PC-9 (cell line): ENCODE measurements at regions of chr19 and their contacts with region 1.

Region 1: GRCh38 chr19:12847159-12848139 is 9.1 kb downstream of the MAST1 start:
- DNase-seq: peak; percentile 76 to 92
- H3K4me3 ChIP-seq: peak overlapping the region; percentile 49; the same call in 1 of the 2 replicates
- H3K27ac ChIP-seq: no peak overlapping the region
- H3K4me1 ChIP-seq: 0 out of 2 replicates have a peak, but pooled peaks cover 3% of the 10 kb centered on the region
- H3K27me3 ChIP-seq: no peaks in the 10 kb centered on the region
- CTCF ChIP-seq: peak; percentile 99

Region 2: DNA sequence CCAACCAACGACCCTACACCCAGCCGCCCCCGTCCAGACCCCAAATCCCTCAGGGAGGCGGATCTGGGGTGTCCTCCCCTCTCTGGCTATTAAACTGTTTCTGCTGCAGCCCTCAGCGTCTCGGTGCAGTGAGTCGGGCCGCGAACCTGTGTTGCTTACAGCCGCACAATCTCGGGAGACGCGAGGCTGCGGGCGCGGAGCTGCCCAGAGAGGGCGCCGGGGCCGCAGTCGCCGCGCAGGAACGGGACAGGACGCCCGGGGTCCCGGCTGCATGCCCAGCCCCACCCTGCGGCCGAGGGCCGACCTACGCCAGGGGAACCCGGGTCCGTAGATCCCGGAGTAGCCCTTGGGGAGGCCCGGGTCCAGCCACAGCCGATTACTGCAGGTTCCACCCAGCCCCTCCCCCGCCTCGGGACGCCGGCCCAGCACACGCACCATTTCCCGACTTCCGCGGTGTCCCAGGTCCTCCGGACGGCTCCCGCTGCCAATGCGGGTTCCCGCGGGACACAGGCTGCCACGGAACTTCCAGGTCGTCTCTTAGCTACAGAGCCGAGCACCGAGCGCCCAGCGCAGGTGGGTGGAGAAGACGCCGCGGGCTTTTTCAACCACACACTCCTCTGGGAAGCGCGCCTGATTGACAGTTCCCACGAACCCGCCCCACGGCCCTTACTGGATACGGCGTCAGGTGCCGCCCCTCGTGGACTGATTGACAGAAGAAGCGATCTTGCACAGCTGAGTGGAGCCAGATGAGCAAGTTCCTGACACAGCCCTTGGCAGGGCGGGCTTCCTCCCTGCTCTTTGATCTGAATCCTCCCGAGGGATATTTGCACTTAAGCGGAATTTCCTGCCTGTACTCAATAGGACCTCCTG is 446.6 kb before region 1 on chr19 and contains the start of gene ZNF799:
- CTCF ChIA-PET with region 1: no interaction called
- POLR2A ChIA-PET with region 1: interaction called, 10 read pairs
- intact Hi-C with region 1: no loop called
- DNase-seq: peak; percentile 96 to 97
- H3K4me3 ChIP-seq: peak within 1 kb of the TSS; percentile 93
- H3K27ac ChIP-seq: peak within 1 kb of the TSS; percentile 7; the same call in 1 of the 2 replicates
- H3K4me1 ChIP-seq: peaks cover 11% of the 10 kb centered on the region; the same call in 1 of the 2 replicates
- H3K27me3 ChIP-seq: no peaks in the 10 kb centered on the region
- CTCF ChIP-seq: no peak; the same call in 1 of the 2 replicates
- total RNA-seq, gene ZNF799: 2.5 and 2.9 TPM in 2 replicates

Region 3: DNA sequence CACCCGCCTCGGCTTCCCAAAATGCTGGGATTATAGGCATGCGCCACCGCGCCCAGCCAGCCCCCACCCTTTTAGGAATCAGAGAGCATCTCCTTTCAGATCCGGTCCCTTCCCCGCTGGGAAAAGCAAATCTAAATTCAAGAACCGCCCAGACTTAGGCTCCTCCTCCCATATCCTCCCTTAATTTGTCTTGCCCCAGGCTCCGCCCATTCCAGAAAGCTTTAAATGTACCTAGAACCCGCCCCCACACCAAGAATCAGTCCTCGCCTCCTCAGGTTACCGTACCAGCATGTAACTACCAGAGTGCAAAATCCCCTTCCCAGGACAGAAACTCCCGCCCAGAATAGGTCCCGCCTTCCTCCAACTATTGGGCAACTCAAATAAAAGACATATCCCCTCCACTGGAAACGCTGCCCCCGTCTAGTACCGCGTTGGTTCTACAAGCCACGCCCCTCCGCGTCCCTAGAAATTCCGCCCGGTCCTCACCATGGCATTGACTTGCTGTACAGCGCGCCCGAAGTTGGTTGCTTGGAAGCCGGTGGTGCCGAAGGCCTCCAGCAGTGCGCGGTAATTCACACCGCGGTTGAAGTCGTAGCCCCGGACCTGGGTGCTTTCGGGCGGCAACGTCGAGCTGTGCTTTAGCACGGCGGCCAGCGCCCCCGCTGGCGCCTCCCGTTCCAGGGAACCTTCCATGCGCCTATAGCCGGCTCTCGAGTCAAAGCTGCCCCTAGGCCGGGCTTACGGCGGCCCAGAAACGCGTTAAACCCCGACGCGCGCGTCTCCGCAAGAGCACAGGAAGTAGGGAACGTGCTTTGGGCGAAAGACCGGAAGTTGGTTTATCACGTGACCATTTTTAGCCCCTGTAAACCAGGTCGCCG is 166.1 kb before region 1 on chr19 and contains the start of gene DHPS:
- CTCF ChIA-PET with region 1: interaction called, 10 read pairs
- POLR2A ChIA-PET with region 1: no interaction called
- intact Hi-C with region 1: no loop called
- DNase-seq: peak; percentile 93 to 98
- H3K4me3 ChIP-seq: peak within 1 kb of the TSS; percentile 76
- H3K27ac ChIP-seq: peak within 1 kb of the TSS; percentile 98
- H3K4me1 ChIP-seq: peaks cover 11% of the 10 kb centered on the region; the same call in 1 of the 2 replicates
- H3K27me3 ChIP-seq: no peaks in the 10 kb centered on the region
- CTCF ChIP-seq: peak; percentile 30; the same call in 1 of the 2 replicates
- total RNA-seq, gene DHPS: 106 and 121 TPM in 2 replicates

Region 4: GRCh38 chr19:12766051-12766521 is 81.4 kb before region 1 on chr19:
- CTCF ChIA-PET with region 1: interaction called, 5 read pairs
- POLR2A ChIA-PET with region 1: no interaction called
- intact Hi-C with region 1: loop called (anchors 1 kb)
- DNase-seq: peak; percentile 59 to 85
- H3K4me3 ChIP-seq: peak overlapping the region; percentile 25; the same call in 1 of the 2 replicates
- H3K27ac ChIP-seq: no peak overlapping the region
- H3K4me1 ChIP-seq: no peaks in the 10 kb centered on the region
- H3K27me3 ChIP-seq: no peaks in the 10 kb centered on the region
- CTCF ChIP-seq: peak; percentile 85

Region 5: GRCh38 chr19:12782229-12783028 is 65.0 kb before region 1 on chr19:
- CTCF ChIA-PET with region 1: no interaction called
- POLR2A ChIA-PET with region 1: no interaction called
- intact Hi-C with region 1: no loop called
- DNase-seq: peak in 1 of 2 experiments; percentile 76
- H3K4me3 ChIP-seq: peak overlapping the region; percentile 65
- H3K27ac ChIP-seq: peak overlapping the region; percentile 86
- H3K4me1 ChIP-seq: peaks cover 75% of the 10 kb centered on the region
- H3K27me3 ChIP-seq: no peaks in the 10 kb centered on the region
- CTCF ChIP-seq: no peak; the same call in 1 of the 2 replicates

Region 6: GRCh38 chr19:12867120-12868099 is 20.0 kb after region 1 on chr19:
- CTCF ChIA-PET with region 1: interaction called, 14 read pairs
- POLR2A ChIA-PET with region 1: interaction called, 11 read pairs
- intact Hi-C with region 1: no loop called
- DNase-seq: peak; percentile 72 to 83
- H3K4me3 ChIP-seq: peak overlapping the region; percentile 87
- H3K27ac ChIP-seq: no peak overlapping the region
- H3K4me1 ChIP-seq: no peaks in the 10 kb centered on the region
- H3K27me3 ChIP-seq: no peaks in the 10 kb centered on the region
- CTCF ChIP-seq: no peak; the same call in 1 of the 2 replicates

Region 7: GRCh38 chr19:12872941-12873890 is 25.8 kb after region 1 on chr19:
- CTCF ChIA-PET with region 1: interaction called, 14 read pairs
- POLR2A ChIA-PET with region 1: no interaction called
- intact Hi-C with region 1: no loop called
- DNase-seq: peak; percentile 70 to 93
- H3K4me3 ChIP-seq: peak overlapping the region; percentile 38; the same call in 1 of the 2 replicates
- H3K27ac ChIP-seq: no peak overlapping the region
- H3K4me1 ChIP-seq: no peaks in the 10 kb centered on the region
- H3K27me3 ChIP-seq: no peaks in the 10 kb centered on the region
- CTCF ChIP-seq: 0 out of 2 replicates have a peak, but pooled peaks have one; percentile 13

Region 8: GRCh38 chr19:12994701-12995595 is 147.5 kb after region 1 on chr19 and contains the start of gene NFIX:
- CTCF ChIA-PET with region 1: no interaction called
- POLR2A ChIA-PET with region 1: no interaction called
- intact Hi-C with region 1: no loop called
- DNase-seq: peak in 1 of 2 experiments; percentile 54
- H3K4me3 ChIP-seq: peak within 1 kb of the TSS; percentile 59
- H3K27ac ChIP-seq: no peak within 1 kb of the TSS
- H3K4me1 ChIP-seq: peaks cover 5% of the 10 kb centered on the region; the same call in 1 of the 2 replicates
- H3K27me3 ChIP-seq: peaks cover 27% of the 10 kb centered on the region
- CTCF ChIP-seq: no peak
- total RNA-seq, gene NFIX: 19.7 and 24.2 TPM in 2 replicates

Region 9: GRCh38 chr19:13172068-13172896 is 324.8 kb after region 1 on chr19:
- CTCF ChIA-PET with region 1: no interaction called
- POLR2A ChIA-PET with region 1: no interaction called
- intact Hi-C with region 1: no loop called
- DNase-seq: peak; percentile 95 to 97
- H3K4me3 ChIP-seq: no peak overlapping the region; the same call in 1 of the 2 replicates
- H3K27ac ChIP-seq: peak overlapping the region; percentile 99
- H3K4me1 ChIP-seq: peaks cover 63% of the 10 kb centered on the region
- H3K27me3 ChIP-seq: no peaks in the 10 kb centered on the region
- CTCF ChIP-seq: no peak

Region 10: GRCh38 chr19:14318873-14319272 is 1471.4 kb after region 1 on chr19:
- CTCF ChIA-PET with region 1: no interaction called
- POLR2A ChIA-PET with region 1: no interaction called
- intact Hi-C with region 1: no loop called
- DNase-seq: peak in 1 of 2 experiments; percentile 15
- H3K4me3 ChIP-seq: no peak overlapping the region
- H3K27ac ChIP-seq: no peak overlapping the region
- H3K4me1 ChIP-seq: no peaks in the 10 kb centered on the region
- H3K27me3 ChIP-seq: peaks cover 24% of the 10 kb centered on the region
- CTCF ChIP-seq: peak; percentile 41; the same call in 1 of the 2 replicates